HCT116 (cell line): ENCODE measurements at regions of chr4 and their contacts with region 1.

Region 1: DNA sequence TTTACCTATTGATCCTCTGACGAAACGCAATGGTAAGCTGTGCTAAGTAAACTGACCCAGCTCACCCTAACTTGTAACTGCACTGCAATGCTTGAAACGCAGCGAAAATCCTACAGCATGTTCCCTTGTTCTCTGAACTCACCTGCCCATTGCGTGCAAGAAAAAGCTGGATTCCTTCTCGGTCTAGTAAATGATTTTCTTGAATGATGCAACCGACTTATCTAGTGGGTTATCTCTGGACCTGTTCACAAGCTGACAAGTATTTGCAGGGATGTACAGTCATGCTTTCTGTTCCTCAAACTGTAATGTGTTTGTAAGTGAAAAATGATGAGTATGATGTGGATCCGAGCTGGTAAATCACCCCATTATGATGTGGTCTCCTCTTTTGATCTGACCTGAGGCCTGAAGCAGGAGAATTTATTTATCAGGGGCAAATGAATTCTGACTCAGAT is 140.1 kb downstream of the BTC start:
- DNase-seq: peak; percentile 96
- ATAC-seq: peak; percentile 78
- H3K4me3 ChIP-seq: peak overlapping the region; percentile 1 to 14; a peak in 2 of 4 replicates
- H3K27ac ChIP-seq: peak overlapping the region; percentile 93
- H3K4me1 ChIP-seq: peaks cover 60 to 92% of the 10 kb centered on the region in 2 experiments
- H3K27me3 ChIP-seq: no peaks in the 10 kb centered on the region
- CTCF ChIP-seq: no peak
- POLR2A ChIP-seq: peak; percentile 10
- RAD21 ChIP-seq: no peak

Region 2: DNA sequence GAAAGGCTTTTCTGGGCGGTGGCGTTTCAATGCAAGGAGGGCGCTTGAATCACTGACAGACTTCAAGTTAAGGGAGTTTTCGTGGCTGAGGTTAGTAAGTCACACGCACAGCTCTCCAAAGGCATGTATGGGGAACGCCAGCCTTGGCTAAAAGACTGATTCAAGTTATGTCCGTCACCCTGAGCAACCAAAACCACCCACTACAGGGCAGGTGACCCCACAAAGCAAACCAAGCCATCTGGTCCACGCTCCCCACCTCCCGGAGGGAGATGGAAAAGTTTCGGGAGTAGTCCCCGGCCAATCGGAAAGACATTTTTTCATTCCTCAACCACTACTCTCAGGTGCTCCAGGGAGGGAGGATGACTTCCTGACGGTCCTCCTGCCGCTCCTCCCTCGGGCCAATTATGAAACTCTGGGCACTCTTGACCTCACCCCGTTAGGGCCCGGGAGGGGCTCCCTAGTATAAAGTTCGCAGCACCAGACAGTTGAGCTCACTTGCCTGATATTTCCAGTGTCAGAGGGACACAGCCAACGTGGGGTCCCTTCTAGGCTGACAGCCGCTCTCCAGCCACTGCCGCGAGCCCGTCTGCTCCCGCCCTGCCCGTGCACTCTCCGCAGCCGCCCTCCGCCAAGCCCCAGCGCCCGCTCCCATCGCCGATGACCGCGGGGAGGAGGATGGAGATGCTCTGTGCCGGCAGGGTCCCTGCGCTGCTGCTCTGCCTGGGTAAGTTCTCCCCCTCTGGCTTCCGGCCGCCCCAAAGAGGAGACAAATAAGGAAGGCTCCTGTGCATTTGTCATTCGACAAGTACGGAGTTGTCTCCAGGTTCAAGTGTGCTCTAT is 289.4 kb before region 1 on chr4 and contains the start of gene EREG:
- CTCF ChIA-PET with region 1: no interaction called
- POLR2A ChIA-PET with region 1: interaction called, 12 read pairs
- RAD21 ChIA-PET with region 1: no interaction called
- intact Hi-C with region 1: no loop called
- DNase-seq: peak; percentile 74
- ATAC-seq: peak; percentile 71
- H3K4me3 ChIP-seq: peak within 1 kb of the TSS; percentile 76 to 91
- H3K27ac ChIP-seq: peak within 1 kb of the TSS; percentile 94
- H3K4me1 ChIP-seq: peaks cover 50 to 89% of the 10 kb centered on the region in 2 experiments
- H3K27me3 ChIP-seq: no peaks in the 10 kb centered on the region
- CTCF ChIP-seq: no peak
- POLR2A ChIP-seq: peak; percentile 76
- RAD21 ChIP-seq: no peak
- total RNA-seq, gene EREG: 498 TPM

Region 3: GRCh38 chr4:74456056-74456744 is 198.1 kb before region 1 on chr4:
- CTCF ChIA-PET with region 1: no interaction called
- POLR2A ChIA-PET with region 1: no interaction called
- RAD21 ChIA-PET with region 1: no interaction called
- intact Hi-C with region 1: no loop called
- DNase-seq: no peak
- ATAC-seq: peak; percentile 75
- H3K4me3 ChIP-seq: no peak overlapping the region
- H3K27ac ChIP-seq: peak overlapping the region; percentile 85
- H3K4me1 ChIP-seq: peaks cover 41 to 67% of the 10 kb centered on the region in 2 experiments
- H3K27me3 ChIP-seq: no peaks in the 10 kb centered on the region
- CTCF ChIP-seq: no peak
- POLR2A ChIP-seq: no peak
- RAD21 ChIP-seq: peak; percentile 33

Region 4: GRCh38 chr4:74632634-74633033 is 21.6 kb before region 1 on chr4:
- CTCF ChIA-PET with region 1: no interaction called
- POLR2A ChIA-PET with region 1: interaction called, 65 read pairs
- RAD21 ChIA-PET with region 1: no interaction called
- intact Hi-C with region 1: loop called (anchors 1 kb)
- DNase-seq: peak; percentile 95
- ATAC-seq: peak; percentile 64
- H3K4me3 ChIP-seq: peak overlapping the region in 1 of 2 experiments; percentile 9; a peak in 1 of 4 replicates
- H3K27ac ChIP-seq: peak overlapping the region; percentile 94
- H3K4me1 ChIP-seq: peaks cover 86 to 100% of the 10 kb centered on the region in 2 experiments
- H3K27me3 ChIP-seq: no peaks in the 10 kb centered on the region
- CTCF ChIP-seq: no peak
- POLR2A ChIP-seq: no peak
- RAD21 ChIP-seq: no peak

Region 5: GRCh38 chr4:74640111-74640903 is 13.9 kb before region 1 on chr4:
- CTCF ChIA-PET with region 1: interaction called, 3 read pairs
- POLR2A ChIA-PET with region 1: interaction called, 43 read pairs
- RAD21 ChIA-PET with region 1: no interaction called
- intact Hi-C with region 1: loop called (anchors 1 kb)
- DNase-seq: no peak
- ATAC-seq: peak; percentile 29; the same call in 1 of the 2 replicates
- H3K4me3 ChIP-seq: no peak overlapping the region
- H3K27ac ChIP-seq: peak overlapping the region; percentile 94
- H3K4me1 ChIP-seq: peaks cover 73 to 77% of the 10 kb centered on the region in 2 experiments
- H3K27me3 ChIP-seq: no peaks in the 10 kb centered on the region
- CTCF ChIP-seq: no peak
- POLR2A ChIP-seq: peak; percentile 55
- RAD21 ChIP-seq: no peak

Region 6: GRCh38 chr4:74665377-74665776 is 11.1 kb after region 1 on chr4:
- CTCF ChIA-PET with region 1: interaction called, 3 read pairs
- POLR2A ChIA-PET with region 1: interaction called, 47 read pairs
- RAD21 ChIA-PET with region 1: no interaction called
- intact Hi-C with region 1: no loop called
- DNase-seq: peak; percentile 80
- ATAC-seq: peak; percentile 81
- H3K4me3 ChIP-seq: peak overlapping the region in 1 of 2 experiments; percentile 22; a peak in 2 of 4 replicates
- H3K27ac ChIP-seq: peak overlapping the region; percentile 93
- H3K4me1 ChIP-seq: peaks cover 86 to 99% of the 10 kb centered on the region in 2 experiments
- H3K27me3 ChIP-seq: no peaks in the 10 kb centered on the region
- CTCF ChIP-seq: no peak
- POLR2A ChIP-seq: no peak
- RAD21 ChIP-seq: no peak